T-cell (primary cell): ENCODE measurements at regions of chr11 and their contacts with region 1.

Region 1: GRCh38 chr11:83051760-83052671 is 19.7 kb downstream of the RAB30 start:
- DNase-seq: no peak
- ATAC-seq: no peak
- H3K4me3 ChIP-seq: no peak overlapping the region
- H3K4me3 Mint-ChIP-seq: no peak overlapping the region
- H3K27ac ChIP-seq: no peak overlapping the region
- H3K27ac Mint-ChIP-seq: no peak overlapping the region
- H3K4me1 ChIP-seq: peaks cover 9 to 12% of the 10 kb centered on the region in 2 experiments
- H3K4me1 Mint-ChIP-seq: peaks cover 38 to 46% (median 42%) of the 10 kb centered on the region in 3 donors
- H3K27me3 ChIP-seq: no peaks in the 10 kb centered on the region
- H3K27me3 Mint-ChIP-seq: no peaks in the 10 kb centered on the region

Region 2: GRCh38 chr11:83019888-83020579 is 32.0 kb before region 1 on chr11:
- CTCF ChIA-PET with region 1: no interaction called
- POLR2A ChIA-PET with region 1: interaction called in 1 of 2 experiments, 18 read pairs
- DNase-seq: no peak
- ATAC-seq: peak in 1 of 4 experiments; percentile 12
- H3K4me3 ChIP-seq: no peak overlapping the region
- H3K4me3 Mint-ChIP-seq: no peak overlapping the region
- H3K27ac ChIP-seq: no peak overlapping the region
- H3K27ac Mint-ChIP-seq: no peak overlapping the region
- H3K4me1 ChIP-seq: peaks cover 3 to 11% of the 10 kb centered on the region in 2 experiments
- H3K4me1 Mint-ChIP-seq: peaks cover 26 to 33% (median 31%) of the 10 kb centered on the region in 3 donors
- H3K27me3 ChIP-seq: no peaks in the 10 kb centered on the region
- H3K27me3 Mint-ChIP-seq: no peaks in the 10 kb centered on the region

Region 3: DNA sequence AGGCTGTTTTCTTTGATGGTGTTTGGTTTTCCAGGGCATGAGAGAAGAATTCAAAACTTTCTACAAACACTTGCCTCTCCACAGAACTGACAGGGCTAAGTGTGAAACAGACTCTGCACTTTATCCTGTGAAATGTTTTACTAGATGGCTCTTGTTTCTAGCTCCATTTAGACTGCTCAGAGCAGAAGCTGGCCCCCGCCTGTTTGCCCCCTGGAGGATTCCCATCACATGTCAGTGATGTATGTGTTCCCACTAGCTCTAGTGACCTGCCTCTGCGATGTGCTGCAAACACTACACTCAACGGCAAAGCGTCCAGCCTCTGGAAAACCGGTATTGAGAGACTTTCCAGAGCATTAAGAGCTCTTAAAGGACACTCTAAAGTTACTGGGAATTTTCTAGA is 63.5 kb after region 1 on chr11:
- CTCF ChIA-PET with region 1: no interaction called
- POLR2A ChIA-PET with region 1: no interaction called
- DNase-seq: peak in 1 of 35 experiments; percentile 4
- ATAC-seq: no peak
- H3K4me3 ChIP-seq: no peak overlapping the region
- H3K4me3 Mint-ChIP-seq: peak overlapping the region; percentile 52 to 87 (median 65)
- H3K27ac ChIP-seq: no peak overlapping the region
- H3K27ac Mint-ChIP-seq: peak overlapping the region in 1 of 2 donors; percentile 57
- H3K4me1 ChIP-seq: peaks cover 5 to 24% of the 10 kb centered on the region in 2 experiments
- H3K4me1 Mint-ChIP-seq: peaks cover 49 to 53% (median 52%) of the 10 kb centered on the region in 3 donors
- H3K27me3 ChIP-seq: no peaks in the 10 kb centered on the region
- H3K27me3 Mint-ChIP-seq: no peaks in the 10 kb centered on the region

Region 4: DNA sequence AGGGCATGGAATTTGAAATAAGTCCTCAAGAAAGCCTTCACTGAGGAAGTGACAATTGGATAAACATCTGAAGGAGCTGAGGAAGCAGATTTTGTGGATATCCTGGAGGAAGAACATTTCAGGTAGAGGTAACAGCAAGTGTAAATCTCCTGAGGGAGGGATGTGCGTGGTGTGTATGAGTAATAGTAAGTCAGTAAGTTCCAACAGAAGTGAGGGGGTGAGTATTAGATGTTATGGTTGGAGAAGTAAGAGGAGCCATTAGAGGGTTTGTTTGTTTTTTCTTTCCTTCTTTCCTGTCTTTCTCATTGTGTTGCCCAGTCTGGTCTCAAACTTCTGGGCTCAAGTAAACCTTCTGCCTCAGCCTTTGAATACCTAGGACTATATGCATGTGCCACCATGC is 170.5 kb after region 1 on chr11:
- CTCF ChIA-PET with region 1: interaction called in 1 of 2 experiments, 11 read pairs
- POLR2A ChIA-PET with region 1: no interaction called
- DNase-seq: no peak
- ATAC-seq: no peak
- H3K4me3 ChIP-seq: no peak overlapping the region
- H3K4me3 Mint-ChIP-seq: no peak overlapping the region
- H3K27ac ChIP-seq: no peak overlapping the region
- H3K27ac Mint-ChIP-seq: no peak overlapping the region
- H3K4me1 ChIP-seq: no peaks in the 10 kb centered on the region
- H3K4me1 Mint-ChIP-seq: no peaks in the 10 kb centered on the region
- H3K27me3 ChIP-seq: no peaks in the 10 kb centered on the region
- H3K27me3 Mint-ChIP-seq: peaks cover 0 to 3% of the 10 kb centered on the region in 2 donors